ENCODE measurements at regions of chr3 and their contacts with region 1.

Region 1: DNA sequence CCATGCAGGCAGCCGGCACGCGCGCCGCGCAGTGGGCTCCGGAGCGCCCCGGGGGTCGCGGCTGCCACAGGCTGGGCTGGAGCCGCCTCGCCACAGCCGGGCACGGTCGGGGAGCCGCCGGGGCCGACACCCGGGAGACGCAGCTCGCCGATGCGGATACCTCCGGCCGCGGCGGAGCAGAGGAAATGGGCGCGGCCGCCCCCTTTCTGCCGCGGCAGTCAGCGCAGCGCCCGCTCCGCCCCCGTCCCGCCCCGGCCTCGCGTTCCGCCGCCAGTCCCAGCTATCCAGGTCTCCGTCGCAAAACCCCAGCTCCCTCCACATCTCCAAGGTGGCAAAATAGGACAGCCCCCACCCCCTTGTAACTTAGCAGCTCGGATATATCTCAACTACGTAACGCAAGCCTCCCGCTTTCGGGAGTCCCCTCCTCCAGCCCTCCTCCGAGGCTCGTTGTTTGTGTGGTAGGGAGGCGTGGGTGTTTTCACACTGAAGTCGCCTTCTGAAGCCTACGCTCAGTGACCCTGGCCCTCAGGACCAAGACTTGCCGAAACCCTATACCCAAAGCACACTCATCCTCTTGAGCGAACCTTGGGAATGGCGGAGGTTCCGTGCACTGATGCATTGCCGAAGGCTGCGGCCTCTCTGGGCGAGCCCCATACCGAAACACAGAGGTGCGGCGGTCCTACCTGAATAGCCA is at the start of gene SH3BP5:
- DNase-seq: peak; percentile 86
- H3K4me3 ChIP-seq: peak within 1 kb of the TSS; percentile 88
- H3K27ac ChIP-seq: peak within 1 kb of the TSS; percentile 24
- H3K4me1 ChIP-seq: peaks cover 50% of the 10 kb centered on the region
- CTCF ChIP-seq: peak; percentile 73
- total RNA-seq, gene SH3BP5: 15.1 and 15.7 TPM in 2 replicates

Region 2: GRCh38 chr3:15291589-15292541 is 40.7 kb before region 1 on chr3:
- CTCF ChIA-PET with region 1: interaction called, 3 read pairs
- POLR2A ChIA-PET with region 1: interaction called, 3 read pairs
- intact Hi-C with region 1: loop called (anchors 2 kb)
- DNase-seq: peak; percentile 77
- H3K4me3 ChIP-seq: peak overlapping the region; percentile 10
- H3K27ac ChIP-seq: peak overlapping the region; percentile 71
- H3K4me1 ChIP-seq: peaks cover 45% of the 10 kb centered on the region
- CTCF ChIP-seq: no peak

Region 3: GRCh38 chr3:15345608-15346137 is 13.1 kb after region 1 on chr3:
- CTCF ChIA-PET with region 1: interaction called, 4 read pairs
- POLR2A ChIA-PET with region 1: interaction called, 30 read pairs
- intact Hi-C with region 1: loop called (anchors 1 kb)
- DNase-seq: peak; percentile 87
- H3K4me3 ChIP-seq: peak overlapping the region; percentile 5
- H3K27ac ChIP-seq: peak overlapping the region; percentile 91
- H3K4me1 ChIP-seq: peaks cover 60% of the 10 kb centered on the region
- CTCF ChIP-seq: no peak

Region 4: GRCh38 chr3:15377961-15378791 is 45.6 kb after region 1 on chr3:
- CTCF ChIA-PET with region 1: no interaction called
- POLR2A ChIA-PET with region 1: interaction called, 10 read pairs
- intact Hi-C with region 1: loop called (anchors 1 kb)
- DNase-seq: peak; percentile 97
- H3K4me3 ChIP-seq: no peak overlapping the region
- H3K27ac ChIP-seq: peak overlapping the region; percentile 28
- H3K4me1 ChIP-seq: peaks cover 51% of the 10 kb centered on the region
- CTCF ChIP-seq: peak; percentile 96

Measured in OCI-LY7 (cell line).